Posterior cingulate gyrus (tissue), 11 donors: ENCODE measurements at regions of chr18 and their contacts with region 1.

Region 1: GRCh38 chr18:47748847-47749599 is 181.4 kb downstream of the SMAD2 start:
- DNase-seq: peak; percentile 48 to 97 (median 80)

Region 2: GRCh38 chr18:47050468-47050867 is 698.6 kb before region 1 on chr18:
- intact Hi-C with region 1: loop called (anchors 5 kb)
- DNase-seq: peak in 1 of 10 donors; percentile 26

Region 3: DNA sequence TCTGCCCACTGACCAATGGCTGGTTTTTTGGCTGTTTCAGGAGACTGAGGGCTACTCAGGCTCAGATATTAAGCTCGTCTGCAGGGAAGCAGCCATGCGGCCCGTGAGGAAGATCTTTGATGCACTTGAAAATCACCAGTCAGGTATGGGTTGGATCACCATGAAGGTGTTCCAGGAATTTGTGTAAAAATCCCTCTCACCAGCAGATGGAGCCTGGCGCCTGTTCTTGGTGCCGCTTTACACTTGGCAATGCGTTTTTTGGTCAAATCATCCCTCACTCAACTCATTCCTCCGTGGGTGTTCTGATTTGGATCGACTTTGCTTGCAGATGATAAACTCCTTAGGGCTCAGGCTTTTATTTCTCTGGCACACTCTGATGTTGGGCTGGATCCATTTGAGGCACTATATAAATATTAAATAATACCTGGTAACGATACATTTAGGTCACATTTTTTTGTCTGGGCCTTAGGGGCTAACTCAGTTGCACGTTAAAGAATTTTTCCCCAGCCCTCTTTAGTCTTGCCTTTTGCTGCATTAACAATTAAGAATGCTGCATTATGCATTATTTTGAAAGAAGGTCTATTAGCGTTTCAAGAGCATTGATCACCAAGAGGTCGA is 648.7 kb before region 1 on chr18:
- intact Hi-C with region 1: loop called (anchors 2 kb)
- DNase-seq: peak in 8 of 10 donors; percentile 31 to 90 (median 64)

Region 4: DNA sequence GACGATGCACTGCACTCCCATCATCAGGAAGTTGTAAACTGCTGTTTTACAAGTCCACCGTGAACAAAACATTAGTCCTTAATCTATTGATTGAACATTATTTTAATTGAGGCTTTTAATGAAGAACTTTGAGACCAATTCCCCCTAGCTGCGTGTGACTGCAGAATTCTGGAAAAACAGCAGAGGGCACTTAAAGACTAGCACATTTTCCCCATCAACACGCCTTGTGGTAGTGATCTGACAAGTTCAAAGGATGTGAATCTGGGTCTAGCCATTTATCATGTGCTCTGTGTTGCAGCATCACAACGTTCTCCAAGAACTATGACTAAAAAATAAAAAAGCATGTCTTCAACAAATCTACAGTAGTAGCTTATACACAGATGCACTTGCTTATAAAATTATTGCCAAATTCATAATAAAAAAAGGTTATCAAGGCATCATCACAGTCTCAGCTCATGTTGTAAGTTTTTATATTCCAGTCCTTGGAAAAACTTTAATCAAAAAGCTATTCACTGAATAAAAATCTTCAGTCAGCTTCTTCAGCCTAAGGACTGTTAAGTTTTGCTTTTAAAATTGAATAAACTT is 533.4 kb before region 1 on chr18:
- intact Hi-C with region 1: loop called (anchors 1 kb)
- DNase-seq: peak in 4 of 10 donors; percentile 20 to 86 (median 28)